Activated naive CD8-positive, alpha-beta T cell treated with anti-CD3 and anti-CD28 coated beads, Interleukin-2, amount 10 ng/mL, durations not matched to agents 7 days and 5 days (primary cell): ENCODE measurements at regions of chr11 and their contacts with region 1.

Region 1: DNA sequence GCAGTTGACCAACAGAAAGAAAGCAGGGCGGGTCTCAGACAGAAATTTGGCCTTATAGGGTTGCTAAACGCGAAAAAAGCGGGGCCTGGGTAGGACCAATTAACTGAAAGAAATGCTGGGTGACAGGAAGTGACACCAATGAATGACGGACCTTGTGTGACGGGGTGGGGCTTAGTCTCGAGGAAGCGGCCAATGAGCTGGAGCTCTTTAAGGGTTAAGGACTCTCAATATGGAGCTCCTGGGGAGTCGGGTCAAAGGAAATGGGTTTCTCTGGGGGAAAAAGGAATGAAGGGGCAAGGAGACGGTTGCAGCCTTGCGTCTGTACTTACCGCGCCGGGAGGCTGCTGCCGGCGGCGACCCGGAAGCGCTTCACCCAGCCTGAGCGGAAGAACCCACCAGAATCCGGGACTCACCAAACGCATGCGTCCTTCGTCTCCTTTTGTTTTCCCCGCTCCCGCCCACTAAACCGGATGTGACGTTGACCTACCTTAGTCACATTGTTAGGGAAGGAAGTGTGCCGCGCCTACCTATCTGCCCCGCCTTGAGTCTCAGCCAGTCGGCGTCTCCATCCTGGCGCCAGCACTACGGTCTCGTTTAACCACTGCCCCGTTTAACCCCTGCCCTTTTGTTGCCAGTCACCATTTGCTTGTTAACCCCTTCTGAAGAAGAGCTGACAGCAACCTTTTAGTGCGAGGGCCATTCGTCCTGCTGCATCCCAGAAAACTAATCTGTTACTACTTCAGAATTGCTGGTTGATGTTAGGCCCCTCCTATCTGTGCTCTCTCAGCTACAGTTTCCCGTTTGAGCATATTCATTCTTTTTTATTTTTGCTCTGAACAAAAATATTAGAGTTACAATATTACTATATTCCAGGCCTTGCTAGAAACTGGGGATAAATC is at the start of gene ANAPC15:
- DNase-seq: peak; percentile 89
- ATAC-seq: peak; percentile 89
- H3K4me3 Mint-ChIP-seq: peak within 1 kb of the TSS; percentile 94
- H3K27ac Mint-ChIP-seq: peak within 1 kb of the TSS; percentile 99
- H3K4me1 Mint-ChIP-seq: peaks cover 24% of the 10 kb centered on the region
- H3K27me3 Mint-ChIP-seq: no peaks in the 10 kb centered on the region
- total RNA-seq, gene ANAPC15: 49.0 to 52.5 TPM

Region 2: DNA sequence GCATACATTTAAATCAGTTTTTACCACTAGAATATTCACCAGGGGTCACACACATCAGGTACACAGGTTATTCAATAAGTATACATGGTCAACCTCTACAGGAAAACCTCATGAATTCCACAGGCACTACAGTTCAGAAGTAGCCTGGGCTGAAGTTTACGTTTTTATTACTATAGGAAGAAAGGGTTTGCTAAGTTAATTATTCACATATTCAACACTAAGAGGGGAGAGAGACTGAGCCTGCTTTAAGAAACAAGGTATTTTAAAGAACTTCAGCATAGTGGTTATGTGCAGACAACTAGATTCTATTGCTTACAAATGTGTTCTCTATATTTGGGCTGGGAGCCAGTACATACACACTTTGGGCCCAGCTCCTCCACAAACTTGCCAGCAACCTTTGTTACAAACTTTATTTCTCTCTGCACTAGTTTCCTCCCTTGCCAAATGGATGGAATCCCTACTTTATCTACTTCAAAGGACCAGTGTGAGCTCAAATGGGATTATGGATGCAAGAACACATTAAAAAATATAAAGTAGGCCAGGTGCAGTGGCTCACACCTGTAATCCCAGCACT is 82.0 kb before region 1 on chr11:
- POLR2A ChIA-PET with region 1: no interaction called
- DNase-seq: no peak
- ATAC-seq: no peak
- H3K4me3 Mint-ChIP-seq: no peak overlapping the region
- H3K27ac Mint-ChIP-seq: no peak overlapping the region
- H3K4me1 Mint-ChIP-seq: peaks cover 25% of the 10 kb centered on the region
- H3K27me3 Mint-ChIP-seq: no peaks in the 10 kb centered on the region

Region 3: GRCh38 chr11:72040726-72041441 is 71.7 kb before region 1 on chr11:
- POLR2A ChIA-PET with region 1: interaction called, 13 read pairs
- DNase-seq: peak; percentile 62
- ATAC-seq: peak; percentile 65
- H3K4me3 Mint-ChIP-seq: no peak overlapping the region
- H3K27ac Mint-ChIP-seq: no peak overlapping the region
- H3K4me1 Mint-ChIP-seq: peaks cover 29% of the 10 kb centered on the region
- H3K27me3 Mint-ChIP-seq: no peaks in the 10 kb centered on the region

Region 4: GRCh38 chr11:72079827-72080255 is 32.7 kb before region 1 on chr11:
- POLR2A ChIA-PET with region 1: interaction called, 10 read pairs
- DNase-seq: no peak
- ATAC-seq: no peak
- H3K4me3 Mint-ChIP-seq: peak overlapping the region; percentile 87
- H3K27ac Mint-ChIP-seq: peak overlapping the region; percentile 85
- H3K4me1 Mint-ChIP-seq: peaks cover 49% of the 10 kb centered on the region
- H3K27me3 Mint-ChIP-seq: no peaks in the 10 kb centered on the region

Region 5: DNA sequence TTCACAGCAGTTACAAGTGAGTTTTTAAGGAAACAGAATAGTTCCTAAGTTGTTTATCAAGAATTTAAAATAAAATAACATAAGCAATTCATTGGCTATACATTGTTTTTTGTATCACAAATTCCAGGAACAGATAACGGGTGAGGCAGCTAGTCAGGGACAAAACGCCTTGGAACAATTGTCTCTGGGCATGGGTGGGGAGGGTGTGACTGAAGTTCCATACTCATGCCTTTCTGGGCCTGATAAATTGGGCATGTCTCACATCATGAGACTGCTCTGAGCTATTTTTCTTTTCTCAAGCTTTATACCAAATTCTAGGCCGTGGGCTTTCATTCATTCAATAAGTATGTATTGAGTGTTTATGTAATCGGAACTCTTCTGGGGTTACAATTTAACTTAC is 44.6 kb after region 1 on chr11:
- POLR2A ChIA-PET with region 1: no interaction called
- DNase-seq: no peak
- ATAC-seq: no peak
- H3K4me3 Mint-ChIP-seq: no peak overlapping the region
- H3K27ac Mint-ChIP-seq: no peak overlapping the region
- H3K4me1 Mint-ChIP-seq: no peaks in the 10 kb centered on the region
- H3K27me3 Mint-ChIP-seq: peaks cover 18% of the 10 kb centered on the region

Region 6: GRCh38 chr11:72179804-72180396 is 67.3 kb after region 1 on chr11:
- POLR2A ChIA-PET with region 1: no interaction called
- DNase-seq: no peak
- ATAC-seq: no peak
- H3K4me3 Mint-ChIP-seq: no peak overlapping the region
- H3K27ac Mint-ChIP-seq: no peak overlapping the region
- H3K4me1 Mint-ChIP-seq: peaks cover 2% of the 10 kb centered on the region
- H3K27me3 Mint-ChIP-seq: peaks cover 15% of the 10 kb centered on the region

Region 7: GRCh38 chr11:72222907-72223614 is 110.5 kb after region 1 on chr11:
- POLR2A ChIA-PET with region 1: interaction called, 16 read pairs
- DNase-seq: peak; percentile 95
- ATAC-seq: peak; percentile 81
- H3K4me3 Mint-ChIP-seq: peak overlapping the region; percentile 90
- H3K27ac Mint-ChIP-seq: peak overlapping the region; percentile 84
- H3K4me1 Mint-ChIP-seq: peaks cover 27% of the 10 kb centered on the region
- H3K27me3 Mint-ChIP-seq: peaks cover 8% of the 10 kb centered on the region